Posterior vena cava (tissue), 2 donors: ENCODE measurements at regions of chr2 and their contacts with region 1.

Region 1: DNA sequence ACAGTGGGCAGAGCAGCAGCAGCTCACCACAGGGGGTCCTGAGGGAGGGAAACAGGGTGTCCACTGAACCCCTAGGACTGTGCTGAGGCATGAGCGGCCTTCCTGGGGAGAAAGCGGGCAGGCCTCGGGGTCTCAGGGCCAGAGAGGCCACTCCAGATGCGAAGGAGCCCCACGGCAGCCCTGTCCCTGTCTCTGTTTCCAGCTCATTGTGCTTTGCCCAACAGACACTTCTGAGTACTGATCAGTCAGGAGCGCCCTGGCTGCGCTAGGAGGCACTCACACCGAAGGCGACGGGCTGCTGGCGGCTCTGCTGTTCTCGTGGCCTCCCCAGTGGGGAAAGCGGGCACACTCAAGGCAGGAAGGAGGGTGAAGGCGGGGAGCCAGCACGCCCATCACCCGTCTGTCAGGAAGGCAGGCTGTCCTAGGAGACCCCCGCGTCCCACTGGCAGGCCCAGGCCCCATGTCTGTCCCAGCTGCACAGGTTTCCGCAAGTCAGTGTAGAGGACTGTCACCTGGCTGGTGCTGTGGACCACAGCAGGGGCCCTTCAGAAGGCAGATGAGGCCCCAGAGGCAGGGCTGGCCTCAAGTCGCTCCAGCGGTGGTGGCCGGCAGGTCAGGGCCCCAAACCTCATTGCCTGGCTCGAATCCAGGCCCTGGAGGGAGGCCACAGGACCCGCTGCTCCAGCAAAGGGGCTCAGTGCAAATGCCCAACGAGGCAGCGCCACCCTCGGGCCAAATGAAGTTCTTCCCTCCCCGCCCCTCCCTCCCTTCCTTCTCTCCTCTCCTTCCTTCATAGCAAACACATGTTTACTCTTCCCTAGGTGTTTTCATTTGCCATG is 6.8 kb downstream of the ESPNL start:
- DNase-seq: peak; percentile 68

Region 2: GRCh38 chr2:238083919-238084318 is 23.0 kb before region 1 on chr2:
- intact Hi-C with region 1: loop called in 1 of 2 experiments (anchors 1 kb)
- DNase-seq: no peak

Region 3: DNA sequence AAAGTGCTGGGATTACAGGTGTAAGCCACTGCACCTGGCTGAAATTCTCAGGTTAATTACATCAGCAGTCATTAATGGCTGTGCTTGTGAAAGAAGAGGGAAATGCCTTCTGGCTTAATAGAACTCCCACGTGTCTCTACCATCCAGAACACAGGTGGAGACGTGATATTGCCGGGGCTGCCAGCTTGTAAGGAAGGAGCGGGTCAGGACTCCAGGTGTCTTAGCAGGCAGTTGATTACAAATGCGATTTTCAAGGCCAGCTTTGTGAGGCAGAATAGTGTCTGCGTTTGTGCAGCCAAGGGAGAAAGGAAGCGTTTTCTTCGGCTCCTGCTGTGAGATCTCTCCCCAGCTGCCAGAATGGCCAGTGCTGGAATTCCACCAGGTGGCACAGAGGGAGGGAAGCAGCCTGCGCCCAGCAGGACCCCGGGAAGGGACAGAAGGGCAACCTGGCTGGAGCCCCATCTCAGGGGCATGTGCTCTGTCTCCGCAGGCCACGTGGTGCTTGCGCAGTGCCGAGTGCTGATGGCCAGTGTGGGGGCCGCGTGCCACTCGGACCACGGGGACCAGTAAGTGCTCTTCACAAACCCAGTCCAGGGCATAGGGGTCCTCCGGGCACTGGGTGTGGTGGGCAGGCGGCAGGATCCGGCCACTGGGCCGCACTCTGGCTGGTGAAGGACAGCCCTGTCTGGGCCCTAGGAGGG is 10.4 kb before region 1 on chr2:
- intact Hi-C with region 1: no loop called
- DNase-seq: peak; percentile 77

Region 4: DNA sequence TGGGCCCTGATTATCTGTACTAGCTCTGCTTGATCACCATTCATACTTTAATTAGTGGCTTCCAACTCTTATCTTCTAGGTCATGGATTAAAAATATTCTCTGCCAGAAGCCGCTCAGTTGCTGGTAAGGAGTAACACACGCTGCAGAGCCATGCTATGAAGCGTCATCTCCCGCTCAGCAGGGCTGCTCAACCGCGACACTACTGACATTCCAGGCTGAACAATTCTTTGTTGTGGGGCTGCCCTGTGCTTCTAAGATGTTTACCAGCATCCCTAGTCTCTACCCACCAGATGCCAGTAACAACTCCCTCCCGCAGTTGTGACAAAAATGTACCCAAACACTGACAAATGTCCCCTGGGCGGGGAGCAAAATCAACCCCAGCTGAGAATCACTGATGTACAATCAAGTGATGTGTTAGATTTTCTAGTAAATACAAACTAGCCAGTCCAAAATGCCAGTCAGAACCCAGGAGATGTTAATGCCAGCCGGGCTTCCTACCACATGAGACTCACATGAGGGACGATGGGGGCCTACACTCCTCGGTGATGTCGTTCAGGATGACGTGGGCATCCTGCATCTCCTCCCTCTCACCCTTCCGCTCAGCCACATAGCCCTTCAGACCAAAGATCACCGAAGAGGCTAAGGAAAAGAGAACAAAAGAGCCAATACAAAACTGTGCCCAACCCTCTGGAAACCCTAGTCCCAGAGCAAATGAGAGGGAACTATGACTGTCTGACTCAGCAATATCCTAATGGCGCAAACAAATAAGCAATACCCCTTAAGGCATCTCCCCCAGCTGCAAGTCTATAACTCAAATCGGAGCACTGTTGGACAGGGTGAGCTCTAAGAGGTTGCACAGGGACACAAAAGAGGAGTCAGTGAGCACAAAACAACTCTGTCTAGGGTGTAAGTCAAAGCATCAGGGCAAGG is 81.0 kb after region 1 on chr2:
- intact Hi-C with region 1: no loop called
- DNase-seq: no peak